ENCODE measurements at regions of chr7 and their contacts with region 1.

Region 1: GRCh38 chr7:8217200-8218068 is 44.5 kb downstream of the ICA1 start:
- DNase-seq: peak; percentile 85
- H3K4me3 ChIP-seq: no peak overlapping the region
- H3K27ac ChIP-seq: no peak overlapping the region
- H3K4me1 ChIP-seq: no peaks in the 10 kb centered on the region
- CTCF ChIP-seq: peak; percentile 93

Region 2: GRCh38 chr7:7103343-7104313 is 1113.8 kb before region 1 on chr7:
- CTCF ChIA-PET with region 1: no interaction called
- POLR2A ChIA-PET with region 1: no interaction called
- intact Hi-C with region 1: loop called (anchors 10 kb)
- DNase-seq: peak; percentile 65
- H3K4me3 ChIP-seq: no peak overlapping the region
- H3K27ac ChIP-seq: no peak overlapping the region
- H3K4me1 ChIP-seq: no peaks in the 10 kb centered on the region
- CTCF ChIP-seq: peak; percentile 82

Region 3: DNA sequence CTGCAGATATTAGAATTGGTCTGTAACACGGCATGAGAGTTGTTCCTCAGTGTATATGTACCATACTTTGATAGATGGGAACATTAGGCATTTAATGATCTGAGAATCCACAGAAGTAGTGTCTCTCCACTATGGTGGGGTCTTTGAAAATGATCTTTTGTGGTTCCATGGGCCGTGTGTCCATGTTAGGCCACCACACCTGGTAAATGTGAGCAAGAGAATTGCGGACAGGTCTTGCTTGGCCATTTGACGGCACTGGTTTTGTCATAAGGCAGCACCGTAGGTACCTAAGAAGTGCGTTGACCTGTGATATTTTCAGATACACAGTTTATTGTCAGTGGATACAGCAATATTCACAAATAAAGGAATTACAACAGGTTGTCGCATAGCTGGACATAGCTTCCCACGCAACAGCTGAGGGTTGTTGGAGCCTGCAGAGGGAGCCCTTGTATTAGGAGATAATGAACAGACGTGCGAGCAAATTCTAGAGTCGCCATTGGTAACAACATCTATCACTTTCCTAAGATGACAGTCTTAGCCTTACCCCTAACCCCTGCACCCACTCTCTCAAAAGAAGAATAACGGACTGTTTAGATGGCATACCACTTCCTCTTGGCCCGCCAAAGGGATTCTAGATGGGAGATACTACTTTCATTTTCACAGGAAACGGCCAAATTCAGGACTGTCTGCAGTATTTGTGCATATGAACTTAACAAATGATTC is 793.1 kb before region 1 on chr7:
- CTCF ChIA-PET with region 1: no interaction called
- POLR2A ChIA-PET with region 1: no interaction called
- intact Hi-C with region 1: loop called (anchors 10 kb)
- DNase-seq: peak; percentile 65
- H3K4me3 ChIP-seq: peak overlapping the region; percentile 63
- H3K27ac ChIP-seq: no peak overlapping the region
- H3K4me1 ChIP-seq: no peaks in the 10 kb centered on the region
- CTCF ChIP-seq: peak; percentile 82

Region 4: DNA sequence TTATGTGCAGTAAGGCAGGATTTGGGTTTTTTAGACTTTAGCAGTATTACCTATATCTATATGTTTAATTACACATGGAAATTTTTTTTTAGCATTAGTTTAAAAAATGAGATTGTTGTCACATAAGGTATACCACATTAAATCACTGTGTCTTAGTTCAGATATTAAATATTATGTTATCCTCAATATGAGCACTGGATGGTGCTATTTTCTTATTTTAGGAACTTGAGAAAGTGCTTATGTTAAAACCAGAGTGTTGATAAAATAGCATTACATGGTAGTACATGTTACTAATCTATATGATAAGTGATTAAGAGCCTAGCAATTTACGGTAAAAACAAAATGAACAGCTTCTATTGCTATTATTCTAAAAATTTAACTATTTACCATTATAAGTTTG is 622.0 kb before region 1 on chr7:
- CTCF ChIA-PET with region 1: no interaction called
- POLR2A ChIA-PET with region 1: no interaction called
- intact Hi-C with region 1: loop called (anchors 2 kb)
- DNase-seq: peak; percentile 55
- H3K4me3 ChIP-seq: no peak overlapping the region
- H3K27ac ChIP-seq: no peak overlapping the region
- H3K4me1 ChIP-seq: no peaks in the 10 kb centered on the region
- CTCF ChIP-seq: peak; percentile 80

Region 5: GRCh38 chr7:7681179-7681935 is 536.1 kb before region 1 on chr7:
- CTCF ChIA-PET with region 1: no interaction called
- POLR2A ChIA-PET with region 1: interaction called, 5 read pairs
- intact Hi-C with region 1: loop called (anchors 1 kb)
- DNase-seq: peak; percentile 75
- H3K4me3 ChIP-seq: no peak overlapping the region
- H3K27ac ChIP-seq: peak overlapping the region; percentile 12
- H3K4me1 ChIP-seq: peaks cover 6% of the 10 kb centered on the region
- CTCF ChIP-seq: peak; percentile 91

Region 6: GRCh38 chr7:7761340-7761980 is 456.0 kb before region 1 on chr7:
- CTCF ChIA-PET with region 1: no interaction called
- POLR2A ChIA-PET with region 1: interaction called, 3 read pairs
- intact Hi-C with region 1: loop called (anchors 2 kb)
- DNase-seq: peak; percentile 68
- H3K4me3 ChIP-seq: peak overlapping the region; percentile 65
- H3K27ac ChIP-seq: no peak overlapping the region
- H3K4me1 ChIP-seq: peaks cover 17% of the 10 kb centered on the region
- CTCF ChIP-seq: peak; percentile 74

Region 7: DNA sequence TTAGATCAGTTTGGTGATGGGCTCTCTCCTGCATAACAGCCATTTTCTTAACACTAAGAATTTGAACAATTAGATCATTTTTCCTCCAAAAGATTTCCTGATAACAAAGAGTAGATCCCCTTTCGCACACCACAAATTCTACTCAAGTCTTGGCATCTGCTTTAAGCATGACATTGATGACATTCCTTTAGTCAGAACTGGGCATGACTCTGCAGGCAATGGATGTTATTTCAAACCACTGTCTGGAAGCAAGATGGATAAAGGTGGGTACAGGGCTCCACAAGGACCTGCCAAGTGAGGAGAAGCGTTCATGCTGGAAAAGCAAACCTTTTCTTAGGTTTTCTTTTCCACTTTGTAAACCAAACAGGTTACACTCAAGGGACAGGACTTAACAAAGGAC is 125.3 kb before region 1 on chr7:
- CTCF ChIA-PET with region 1: no interaction called
- POLR2A ChIA-PET with region 1: no interaction called
- intact Hi-C with region 1: loop called (anchors 5 kb)
- DNase-seq: no peak
- H3K4me3 ChIP-seq: no peak overlapping the region
- H3K27ac ChIP-seq: no peak overlapping the region
- H3K4me1 ChIP-seq: no peaks in the 10 kb centered on the region
- CTCF ChIP-seq: no peak

Region 8: GRCh38 chr7:8327199-8327598 is 109.8 kb after region 1 on chr7:
- CTCF ChIA-PET with region 1: no interaction called
- POLR2A ChIA-PET with region 1: no interaction called
- intact Hi-C with region 1: no loop called
- DNase-seq: no peak
- H3K4me3 ChIP-seq: no peak overlapping the region
- H3K27ac ChIP-seq: no peak overlapping the region
- H3K4me1 ChIP-seq: no peaks in the 10 kb centered on the region
- CTCF ChIP-seq: no peak

Region 9: DNA sequence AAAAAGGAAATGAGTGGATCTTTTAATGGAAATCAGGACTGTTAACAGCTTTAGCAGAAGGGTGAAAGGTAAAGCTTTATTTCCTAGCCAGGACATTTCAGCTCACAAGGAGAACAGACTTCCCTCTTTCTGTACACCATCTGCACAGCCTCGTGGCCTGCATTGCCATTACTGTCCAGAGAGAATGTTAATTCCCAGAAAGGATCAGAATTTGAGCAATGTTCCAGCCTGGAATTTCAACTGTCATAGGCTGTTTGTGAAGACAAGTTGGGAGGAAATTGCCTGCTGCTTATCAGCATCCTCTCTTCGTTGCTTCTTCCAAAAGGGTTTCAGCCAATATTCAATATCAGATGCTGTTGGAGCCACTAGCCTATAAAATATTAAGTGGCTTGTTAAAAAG is 238.0 kb after region 1 on chr7:
- CTCF ChIA-PET with region 1: no interaction called
- POLR2A ChIA-PET with region 1: no interaction called
- intact Hi-C with region 1: no loop called
- DNase-seq: no peak
- H3K4me3 ChIP-seq: no peak overlapping the region
- H3K27ac ChIP-seq: no peak overlapping the region
- H3K4me1 ChIP-seq: no peaks in the 10 kb centered on the region
- CTCF ChIP-seq: no peak